ENCODE measurements at regions of chr10 and their contacts with region 1.

Region 1: GRCh38 chr10:19819419-19820033 is 3.3 kb downstream of the PLXDC2 start:
- DNase-seq: peak; percentile 76
- H3K4me3 ChIP-seq: peak overlapping the region in 1 of 3 experiments; percentile 71
- H3K27ac ChIP-seq: peak overlapping the region; percentile 29
- H3K4me1 ChIP-seq: peaks cover 15% of the 10 kb centered on the region
- H3K27me3 ChIP-seq: no peaks in the 10 kb centered on the region
- CTCF ChIP-seq: peak; percentile 68 to 91

Region 2: DNA sequence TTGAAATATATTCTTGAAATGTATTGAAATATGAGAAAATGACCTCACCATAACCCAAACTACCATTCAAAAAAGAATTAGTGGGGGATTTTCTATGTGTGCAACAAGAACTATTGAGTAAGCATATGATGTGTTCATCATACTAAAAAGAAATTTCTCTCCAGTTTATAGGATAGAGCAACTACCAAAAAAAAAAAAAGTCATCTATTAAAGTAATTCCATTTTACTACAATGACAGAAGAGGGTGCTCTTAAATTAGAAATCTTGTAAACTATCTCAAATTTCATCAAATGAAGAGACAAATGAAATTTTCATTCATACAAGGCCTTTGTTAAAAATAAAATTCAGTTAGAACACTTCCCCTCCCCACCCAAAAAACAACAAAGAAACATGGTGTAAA is 198.7 kb before region 1 on chr10:
- CTCF ChIA-PET with region 1: no interaction called
- dilution Hi-C with region 1: no loop called
- in situ Hi-C with region 1: no loop called
- intact Hi-C with region 1: loop called (anchors 2 kb)
- DNase-seq: no peak
- H3K4me3 ChIP-seq: no peak overlapping the region
- H3K27ac ChIP-seq: no peak overlapping the region
- H3K4me1 ChIP-seq: no peaks in the 10 kb centered on the region
- H3K27me3 ChIP-seq: no peaks in the 10 kb centered on the region
- CTCF ChIP-seq: no peak

Region 3: GRCh38 chr10:19719284-19719683 is 100.2 kb before region 1 on chr10:
- CTCF ChIA-PET with region 1: no interaction called
- dilution Hi-C with region 1: no loop called
- in situ Hi-C with region 1: no loop called
- intact Hi-C with region 1: no loop called
- DNase-seq: no peak
- H3K4me3 ChIP-seq: no peak overlapping the region
- H3K27ac ChIP-seq: no peak overlapping the region
- H3K4me1 ChIP-seq: no peaks in the 10 kb centered on the region
- H3K27me3 ChIP-seq: no peaks in the 10 kb centered on the region
- CTCF ChIP-seq: no peak

Region 4: GRCh38 chr10:19922236-19922963 is 102.9 kb after region 1 on chr10:
- CTCF ChIA-PET with region 1: no interaction called
- dilution Hi-C with region 1: no loop called
- in situ Hi-C with region 1: loop called in 1 of 2 experiments (anchors 10 kb)
- intact Hi-C with region 1: loop called (anchors 1 kb)
- DNase-seq: peak; percentile 91
- H3K4me3 ChIP-seq: no peak overlapping the region
- H3K27ac ChIP-seq: peak overlapping the region; percentile 91
- H3K4me1 ChIP-seq: peaks cover 51% of the 10 kb centered on the region
- H3K27me3 ChIP-seq: no peaks in the 10 kb centered on the region
- CTCF ChIP-seq: no peak

Region 5: GRCh38 chr10:19966751-19967150 is 147.2 kb after region 1 on chr10:
- CTCF ChIA-PET with region 1: no interaction called
- dilution Hi-C with region 1: no loop called
- in situ Hi-C with region 1: no loop called
- intact Hi-C with region 1: no loop called
- DNase-seq: no peak
- H3K4me3 ChIP-seq: no peak overlapping the region
- H3K27ac ChIP-seq: no peak overlapping the region
- H3K4me1 ChIP-seq: peaks cover 16% of the 10 kb centered on the region
- H3K27me3 ChIP-seq: no peaks in the 10 kb centered on the region
- CTCF ChIP-seq: no peak

Region 6: GRCh38 chr10:20004087-20004523 is 184.6 kb after region 1 on chr10:
- CTCF ChIA-PET with region 1: no interaction called
- dilution Hi-C with region 1: no loop called
- in situ Hi-C with region 1: no loop called
- intact Hi-C with region 1: loop called (anchors 5 kb)
- DNase-seq: peak; percentile 43
- H3K4me3 ChIP-seq: no peak overlapping the region
- H3K27ac ChIP-seq: peak overlapping the region; percentile 93
- H3K4me1 ChIP-seq: peaks cover 18% of the 10 kb centered on the region
- H3K27me3 ChIP-seq: no peaks in the 10 kb centered on the region
- CTCF ChIP-seq: no peak

Region 7: DNA sequence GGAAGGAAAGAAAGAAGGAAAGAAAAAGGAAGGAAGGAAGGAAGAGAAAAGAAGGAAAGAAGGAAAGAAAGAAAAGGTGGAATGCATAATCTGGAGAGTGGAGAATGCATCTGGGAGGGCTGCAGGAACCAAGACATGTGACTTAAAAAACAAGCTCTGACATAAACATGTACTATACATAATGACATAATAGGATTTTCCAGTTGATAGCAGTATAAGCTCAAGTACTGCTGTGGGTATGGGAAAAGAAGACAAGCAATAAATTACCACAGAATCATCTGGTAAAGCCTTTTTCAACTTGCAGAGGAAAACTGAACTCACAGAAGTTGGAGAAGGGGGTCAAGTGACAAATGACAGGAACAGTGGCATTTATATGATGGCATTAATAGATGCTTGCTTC is 342.6 kb after region 1 on chr10:
- CTCF ChIA-PET with region 1: no interaction called
- dilution Hi-C with region 1: no loop called
- in situ Hi-C with region 1: no loop called
- intact Hi-C with region 1: loop called (anchors 5 kb)
- DNase-seq: no peak
- H3K4me3 ChIP-seq: no peak overlapping the region
- H3K27ac ChIP-seq: no peak overlapping the region
- H3K4me1 ChIP-seq: no peaks in the 10 kb centered on the region
- H3K27me3 ChIP-seq: no peaks in the 10 kb centered on the region
- CTCF ChIP-seq: no peak

Region 8: GRCh38 chr10:20768843-20769242 is 949.3 kb after region 1 on chr10:
- CTCF ChIA-PET with region 1: interaction called, 4 read pairs
- dilution Hi-C with region 1: no loop called
- in situ Hi-C with region 1: loop called (anchors 25 kb)
- intact Hi-C with region 1: loop called (anchors 2 kb)
- DNase-seq: peak; percentile 11
- H3K4me3 ChIP-seq: no peak overlapping the region
- H3K27ac ChIP-seq: no peak overlapping the region
- H3K4me1 ChIP-seq: peaks cover 6% of the 10 kb centered on the region
- H3K27me3 ChIP-seq: peaks cover under 1% of the 10 kb centered on the region
- CTCF ChIP-seq: peak; percentile 28 to 48

Region 9: GRCh38 chr10:20858292-20859124 is 1039.0 kb after region 1 on chr10:
- CTCF ChIA-PET with region 1: no interaction called
- dilution Hi-C with region 1: no loop called
- in situ Hi-C with region 1: no loop called
- intact Hi-C with region 1: loop called (anchors 1 kb)
- DNase-seq: peak; percentile 25
- H3K4me3 ChIP-seq: no peak overlapping the region
- H3K27ac ChIP-seq: no peak overlapping the region
- H3K4me1 ChIP-seq: no peaks in the 10 kb centered on the region
- H3K27me3 ChIP-seq: no peaks in the 10 kb centered on the region
- CTCF ChIP-seq: peak; percentile 38 to 54